Panc1 (cell line): ENCODE measurements at regions of chr1 and their contacts with region 1.

Region 1: GRCh38 chr1:241311056-241311746 is 45.8 kb downstream of the RGS7 start:
- DNase-seq: no peak
- ATAC-seq: no peak
- H3K4me3 ChIP-seq: no peak overlapping the region
- H3K27ac ChIP-seq: no peak overlapping the region
- H3K4me1 ChIP-seq: no peaks in the 10 kb centered on the region
- H3K27me3 ChIP-seq: no peaks in the 10 kb centered on the region
- CTCF ChIP-seq: peak; percentile 9; the same call in 1 of the 2 replicates

Region 2: DNA sequence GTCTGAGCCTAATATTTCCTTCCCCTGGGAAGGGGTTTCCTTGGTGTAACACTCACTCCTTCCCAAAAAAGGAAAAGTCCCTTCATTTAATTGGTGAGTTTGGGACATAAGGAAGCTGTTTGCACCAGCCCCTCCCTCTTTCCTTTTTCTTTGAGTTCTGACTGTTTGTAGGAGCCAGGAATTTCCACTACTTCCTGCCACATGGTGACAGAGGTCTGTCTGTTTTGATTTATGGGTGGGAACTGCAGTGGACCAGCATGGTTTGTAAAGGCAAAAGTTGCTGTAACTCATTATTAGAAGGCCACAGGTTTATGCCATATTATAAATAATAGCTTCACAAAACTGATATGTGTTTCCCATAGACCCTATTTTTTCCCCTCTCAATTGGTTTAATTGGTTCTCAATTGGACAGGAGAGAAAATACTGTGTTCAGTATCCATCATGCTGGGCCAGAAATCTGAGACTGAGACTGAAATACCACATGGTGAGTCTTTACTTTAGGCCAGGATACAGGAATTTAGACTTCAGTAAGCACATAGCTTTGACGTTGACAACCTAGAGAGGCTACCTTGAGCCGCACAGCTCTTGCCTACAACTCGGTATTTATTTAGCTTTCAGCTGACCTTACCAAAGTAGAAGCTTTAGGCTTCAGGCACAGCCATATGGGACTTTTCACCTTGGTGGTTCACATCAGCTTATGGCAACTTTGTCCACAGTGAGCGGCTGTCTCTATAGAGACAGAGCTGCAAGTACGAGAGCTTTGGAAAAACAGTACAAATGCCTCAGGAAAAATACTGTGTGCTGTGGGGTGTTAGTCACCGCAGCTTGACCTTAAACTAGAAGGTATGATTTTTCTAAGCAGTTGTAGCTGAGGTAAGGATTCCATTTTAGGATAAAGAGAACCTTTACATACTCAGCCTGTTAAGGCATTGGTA is 85.8 kb after region 1 on chr1:
- CTCF ChIA-PET with region 1: interaction called, 12 read pairs
- POLR2A ChIA-PET with region 1: no interaction called
- in situ Hi-C with region 1: no loop called
- intact Hi-C with region 1: no loop called
- DNase-seq: no peak
- ATAC-seq: no peak
- H3K4me3 ChIP-seq: no peak overlapping the region
- H3K27ac ChIP-seq: no peak overlapping the region
- H3K4me1 ChIP-seq: no peaks in the 10 kb centered on the region
- H3K27me3 ChIP-seq: no peaks in the 10 kb centered on the region
- CTCF ChIP-seq: no peak